Aorta (tissue), 5 donors: ENCODE measurements at regions of chr10 and their contacts with region 1.

Region 1: GRCh38 chr10:114550756-114551635 is 107.1 kb downstream of the ABLIM1 start:
- DNase-seq: peak in 1 of 2 donors; percentile 53
- ATAC-seq: peak; percentile 58
- H3K4me3 ChIP-seq: no peak overlapping the region
- H3K27ac ChIP-seq: no peak overlapping the region
- H3K4me1 ChIP-seq: no peaks in the 10 kb centered on the region
- H3K27me3 ChIP-seq: no peaks in the 10 kb centered on the region

Region 2: DNA sequence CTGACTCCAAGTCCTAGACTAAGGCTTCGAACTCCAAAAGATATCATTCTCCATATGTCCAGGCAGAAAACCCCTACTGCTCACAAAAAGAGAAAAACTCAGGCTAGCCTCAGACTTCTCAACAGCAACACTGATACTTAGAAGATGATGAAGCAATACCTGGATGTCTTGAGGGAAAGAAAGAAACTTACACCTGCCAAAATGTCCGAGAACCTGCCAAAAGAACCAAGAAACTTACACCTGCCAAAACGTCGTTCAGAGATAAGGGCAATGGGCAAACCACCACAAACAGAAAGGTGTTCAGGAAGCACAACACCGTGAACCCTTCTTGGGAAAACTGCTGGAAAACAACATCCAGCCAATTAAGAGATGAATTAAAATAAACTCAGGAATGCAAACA is 91.7 kb after region 1 on chr10:
- intact Hi-C with region 1: no loop called
- DNase-seq: no peak
- ATAC-seq: no peak
- H3K4me3 ChIP-seq: no peak overlapping the region
- H3K27ac ChIP-seq: no peak overlapping the region
- H3K4me1 ChIP-seq: no peaks in the 10 kb centered on the region
- H3K27me3 ChIP-seq: no peaks in the 10 kb centered on the region

Region 3: DNA sequence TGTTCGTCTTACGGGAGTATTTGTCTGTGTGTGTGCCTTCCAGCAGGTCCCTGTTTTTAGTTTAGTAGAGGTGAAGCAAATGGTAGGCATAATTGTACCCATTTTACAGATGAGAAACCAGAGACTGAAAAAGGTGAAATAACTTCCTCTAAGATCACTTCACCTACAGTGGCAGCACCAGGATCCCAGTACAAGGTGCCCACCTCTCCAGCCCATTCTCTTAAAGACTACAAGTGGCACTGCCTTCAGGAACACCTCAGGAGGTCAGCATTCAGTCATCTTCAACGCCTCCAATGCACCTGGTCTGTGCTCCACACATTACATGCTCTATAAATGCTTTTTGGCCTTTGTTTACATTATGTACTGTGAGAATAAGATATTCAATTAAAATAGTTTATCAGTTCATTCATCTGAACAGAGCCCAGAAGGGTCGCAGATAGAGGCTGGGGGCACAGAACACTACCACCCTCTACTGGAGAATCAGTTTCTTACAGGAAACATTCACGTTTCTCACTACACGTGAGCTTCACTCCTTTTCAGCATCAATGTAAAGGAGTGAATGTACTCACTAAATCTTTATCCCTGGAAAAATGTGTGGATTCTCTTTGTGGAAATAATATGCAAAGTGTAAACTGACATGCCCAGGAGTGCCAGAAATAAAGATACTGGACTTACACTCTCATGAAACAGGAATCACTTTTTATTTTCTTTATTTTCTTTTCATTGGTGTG is 152.5 kb after region 1 on chr10:
- intact Hi-C with region 1: loop called (anchors 2 kb)
- DNase-seq: no peak
- ATAC-seq: no peak
- H3K4me3 ChIP-seq: no peak overlapping the region
- H3K27ac ChIP-seq: no peak overlapping the region
- H3K4me1 ChIP-seq: no peaks in the 10 kb centered on the region
- H3K27me3 ChIP-seq: no peaks in the 10 kb centered on the region

Region 4: GRCh38 chr10:114714281-114714741 is 163.3 kb after region 1 on chr10:
- intact Hi-C with region 1: no loop called
- DNase-seq: no peak
- ATAC-seq: no peak
- H3K4me3 ChIP-seq: no peak overlapping the region
- H3K27ac ChIP-seq: no peak overlapping the region
- H3K4me1 ChIP-seq: peaks cover 4 to 5% of the 10 kb centered on the region in 2 donors
- H3K27me3 ChIP-seq: no peaks in the 10 kb centered on the region

Region 5: GRCh38 chr10:114779803-114780609 is 229.0 kb after region 1 on chr10:
- intact Hi-C with region 1: loop called in 1 of 2 experiments (anchors 2 kb)
- DNase-seq: no peak
- ATAC-seq: peak; percentile 48
- H3K4me3 ChIP-seq: no peak overlapping the region
- H3K27ac ChIP-seq: no peak overlapping the region
- H3K4me1 ChIP-seq: peaks cover 0 to 1% of the 10 kb centered on the region in 2 donors
- H3K27me3 ChIP-seq: no peaks in the 10 kb centered on the region

Region 6: GRCh38 chr10:114869520-114869892 is 318.5 kb after region 1 on chr10:
- intact Hi-C with region 1: no loop called
- DNase-seq: no peak
- ATAC-seq: no peak
- H3K4me3 ChIP-seq: no peak overlapping the region
- H3K27ac ChIP-seq: no peak overlapping the region
- H3K4me1 ChIP-seq: no peaks in the 10 kb centered on the region
- H3K27me3 ChIP-seq: no peaks in the 10 kb centered on the region